ENCODE measurements at regions of chr16 and their contacts with region 1.

Region 1: DNA sequence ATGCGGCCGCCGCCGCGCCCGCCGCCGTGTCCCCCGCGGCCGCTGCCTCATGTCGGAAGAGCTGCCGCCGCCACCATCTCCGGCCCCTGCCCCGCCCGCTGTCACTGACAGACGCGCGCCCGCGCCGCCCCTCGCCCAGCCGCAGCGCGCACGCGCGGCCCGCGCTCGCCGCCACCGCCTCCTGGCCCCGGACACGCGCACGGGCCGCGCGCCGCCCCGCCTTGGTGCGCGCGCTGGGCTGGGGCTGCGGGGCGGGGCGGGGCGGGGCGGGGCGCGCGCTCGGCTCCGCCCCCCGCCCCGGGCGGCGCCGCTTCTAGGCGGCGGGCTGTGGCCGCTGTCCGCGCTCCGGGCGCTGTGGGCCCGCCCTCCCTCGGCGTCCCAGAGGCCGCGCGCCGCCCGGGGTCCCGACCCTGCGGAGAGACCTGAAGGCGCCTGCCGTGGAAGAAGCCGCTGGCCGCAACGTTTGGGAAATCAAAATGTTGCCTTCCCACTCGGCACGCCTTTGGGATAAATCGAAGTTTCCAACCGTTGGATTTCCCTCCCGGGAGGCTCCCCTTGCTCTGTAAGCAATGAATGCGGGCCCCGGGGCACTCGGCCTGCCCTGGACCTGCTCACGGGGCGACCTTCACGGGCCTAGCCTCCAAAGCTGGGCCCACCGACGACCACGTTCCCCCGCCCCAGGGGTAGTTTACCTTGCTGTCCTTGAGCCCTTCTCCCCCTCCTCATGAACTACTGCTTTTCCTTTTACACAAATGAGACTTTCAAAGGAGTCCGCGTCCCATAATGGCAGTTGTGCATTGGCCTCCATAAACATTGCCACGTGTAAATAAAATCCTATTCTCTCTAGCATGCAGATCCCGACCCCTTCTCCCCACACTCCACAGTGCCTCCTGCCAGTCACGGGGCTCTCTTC is at the start of gene ADCY9:
- DNase-seq: peak in 1 of 2 donors; percentile 84
- H3K4me3 ChIP-seq: peak within 1 kb of the TSS; percentile 89 to 95
- H3K27ac ChIP-seq: peak within 1 kb of the TSS; percentile 82 to 86
- H3K4me1 ChIP-seq: peaks cover 5 to 10% of the 10 kb centered on the region in 2 donors
- H3K27me3 ChIP-seq: no peaks in the 10 kb centered on the region
- CTCF ChIP-seq: no peak
- total RNA-seq, gene ADCY9: 49.7 TPM

Region 2: GRCh38 chr16:4011225-4011939 is 105.2 kb before region 1 on chr16:
- intact Hi-C with region 1: loop called (anchors 5 kb)
- DNase-seq: no peak
- H3K4me3 ChIP-seq: no peak overlapping the region
- H3K27ac ChIP-seq: peak overlapping the region in 1 of 2 donors; percentile 38
- H3K4me1 ChIP-seq: peaks cover 4 to 14% of the 10 kb centered on the region in 2 donors
- H3K27me3 ChIP-seq: no peaks in the 10 kb centered on the region
- CTCF ChIP-seq: no peak

Region 3: GRCh38 chr16:4053301-4053845 is 63.2 kb before region 1 on chr16:
- intact Hi-C with region 1: loop called (anchors 2 kb)
- DNase-seq: peak; percentile 27 to 91
- H3K4me3 ChIP-seq: peak overlapping the region; percentile 35 to 50
- H3K27ac ChIP-seq: peak overlapping the region; percentile 48 to 75
- H3K4me1 ChIP-seq: peaks cover 3 to 15% of the 10 kb centered on the region in 2 donors
- H3K27me3 ChIP-seq: no peaks in the 10 kb centered on the region
- CTCF ChIP-seq: no peak

Region 4: GRCh38 chr16:4183237-4184036 is 66.8 kb after region 1 on chr16:
- intact Hi-C with region 1: loop called (anchors 2 kb)
- DNase-seq: peak; percentile 51 to 95
- H3K4me3 ChIP-seq: peak overlapping the region; percentile 64 to 69
- H3K27ac ChIP-seq: peak overlapping the region; percentile 92 to 93
- H3K4me1 ChIP-seq: peaks cover 0 to 4% of the 10 kb centered on the region in 2 donors
- H3K27me3 ChIP-seq: no peaks in the 10 kb centered on the region
- CTCF ChIP-seq: peak in 1 of 3 experiments; percentile 28

Region 5: GRCh38 chr16:4200000-4200780 is 83.6 kb after region 1 on chr16:
- intact Hi-C with region 1: no loop called
- DNase-seq: peak; percentile 23 to 84
- H3K4me3 ChIP-seq: no peak overlapping the region
- H3K27ac ChIP-seq: no peak overlapping the region
- H3K4me1 ChIP-seq: peaks cover 0 to 2% of the 10 kb centered on the region in 2 donors
- H3K27me3 ChIP-seq: no peaks in the 10 kb centered on the region
- CTCF ChIP-seq: peak; percentile 80 to 86 (median 84)

Measured in ascending aorta (tissue), 2 donors.